Activated CD8-positive, alpha-beta T cell treated with anti-CD3 and anti-CD28 coated beads for 36 hours (primary cell): ENCODE measurements at regions of chr5 and their contacts with region 1.

Region 1: DNA sequence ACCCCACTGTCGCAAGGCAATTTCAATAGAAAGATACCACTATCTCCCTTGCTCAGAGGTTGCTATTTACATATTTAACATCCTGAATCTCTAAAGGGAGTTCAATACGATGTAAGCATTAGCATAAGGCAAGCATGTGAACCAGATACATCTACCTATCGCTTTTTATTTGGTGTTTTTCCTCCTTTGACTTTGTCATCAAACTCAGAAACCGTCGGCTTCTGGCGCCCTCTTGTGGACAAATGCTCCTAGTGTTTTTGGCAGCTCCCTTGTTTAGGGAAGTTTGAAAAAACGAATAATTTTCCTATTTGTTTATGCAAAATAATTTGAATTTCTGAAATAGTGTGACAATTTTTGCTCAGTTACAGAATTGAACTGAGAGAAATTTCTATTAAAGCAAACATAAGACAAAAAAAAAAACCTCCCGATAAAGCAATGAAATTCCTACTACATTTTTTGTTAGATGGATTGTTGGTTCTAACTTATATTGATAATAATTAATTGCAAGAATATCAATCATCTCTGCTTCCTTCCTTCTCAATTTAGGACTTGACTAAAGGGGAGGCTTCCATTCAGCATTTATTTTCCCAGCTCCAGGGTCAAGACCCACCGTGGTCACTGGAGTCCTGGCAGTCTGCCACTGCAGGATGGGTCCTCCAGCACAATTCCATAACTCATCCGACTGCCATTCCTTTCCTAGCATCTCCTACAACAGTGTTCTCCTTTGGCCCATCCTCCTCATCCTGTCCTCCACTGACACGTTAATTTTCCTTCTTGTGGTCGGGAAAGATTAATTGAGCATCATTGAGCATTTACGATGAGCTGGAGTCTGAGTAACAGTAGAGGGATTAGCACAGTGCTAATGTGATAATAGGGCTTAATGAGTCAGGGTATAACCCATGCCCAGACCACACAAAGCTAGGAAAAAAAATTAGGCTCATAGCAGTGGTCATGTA is 131.8 kb upstream of the CHD1 start:
- DNase-seq: peak; percentile 91
- ATAC-seq: peak; percentile 45
- H3K4me3 Mint-ChIP-seq: no peak overlapping the region
- H3K27ac Mint-ChIP-seq: no peak overlapping the region
- H3K4me1 Mint-ChIP-seq: peaks cover 4% of the 10 kb centered on the region
- H3K27me3 Mint-ChIP-seq: peaks cover 2% of the 10 kb centered on the region
- CTCF ChIP-seq: peak; percentile 98

Region 2: GRCh38 chr5:98796197-98796972 is 264.2 kb before region 1 on chr5:
- CTCF ChIA-PET with region 1: interaction called, 11 read pairs
- POLR2A ChIA-PET with region 1: no interaction called
- intact Hi-C with region 1: no loop called
- DNase-seq: peak; percentile 69
- ATAC-seq: peak; percentile 94
- H3K4me3 Mint-ChIP-seq: no peak overlapping the region
- H3K27ac Mint-ChIP-seq: no peak overlapping the region
- H3K4me1 Mint-ChIP-seq: no peaks in the 10 kb centered on the region
- H3K27me3 Mint-ChIP-seq: no peaks in the 10 kb centered on the region
- CTCF ChIP-seq: peak; percentile 77

Region 3: DNA sequence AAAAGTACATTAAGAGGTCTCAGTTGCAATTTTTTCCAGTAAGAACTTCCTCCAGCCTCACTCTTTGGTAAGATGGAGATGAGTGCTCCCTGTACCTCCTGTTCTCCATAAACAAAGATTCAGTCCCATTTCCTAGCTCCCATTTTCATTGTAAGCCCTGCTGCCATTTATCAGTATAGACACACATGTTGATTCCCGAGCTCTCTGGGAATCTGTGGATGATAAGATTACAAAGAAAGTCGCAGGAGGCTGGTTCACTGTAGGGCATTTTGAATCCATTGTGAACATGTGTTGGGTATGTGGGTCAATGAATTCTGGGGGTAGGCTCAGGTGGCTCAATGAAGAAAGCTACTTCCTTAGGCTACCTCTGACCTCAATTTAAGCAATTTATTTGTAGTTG is 250.4 kb before region 1 on chr5:
- CTCF ChIA-PET with region 1: no interaction called
- POLR2A ChIA-PET with region 1: no interaction called
- intact Hi-C with region 1: no loop called
- DNase-seq: no peak
- ATAC-seq: no peak
- H3K4me3 Mint-ChIP-seq: no peak overlapping the region
- H3K27ac Mint-ChIP-seq: no peak overlapping the region
- H3K4me1 Mint-ChIP-seq: peaks cover 2% of the 10 kb centered on the region
- H3K27me3 Mint-ChIP-seq: no peaks in the 10 kb centered on the region
- CTCF ChIP-seq: no peak

Region 4: DNA sequence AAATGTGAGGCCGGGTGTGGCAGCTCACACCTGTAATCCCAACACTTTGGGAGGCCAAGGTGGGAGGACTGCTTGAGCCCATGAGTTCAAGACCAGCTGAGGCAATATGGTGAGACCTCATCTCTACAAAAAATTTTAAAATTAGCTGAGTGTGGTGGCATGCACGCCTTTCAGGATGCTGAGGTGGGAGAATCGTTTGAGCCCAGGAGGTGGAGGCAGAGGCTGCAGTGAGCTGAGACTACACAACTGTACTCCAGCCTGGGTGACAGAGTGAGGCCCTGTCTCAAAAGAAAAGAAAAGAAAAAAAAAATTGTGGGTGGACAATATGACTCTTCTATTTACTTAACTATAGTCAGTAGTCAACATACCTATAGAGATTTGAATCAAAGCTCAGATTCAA is 136.6 kb before region 1 on chr5:
- CTCF ChIA-PET with region 1: interaction called, 13 read pairs
- POLR2A ChIA-PET with region 1: interaction called, 6 read pairs
- intact Hi-C with region 1: no loop called
- DNase-seq: peak; percentile 29
- ATAC-seq: no peak
- H3K4me3 Mint-ChIP-seq: no peak overlapping the region
- H3K27ac Mint-ChIP-seq: peak overlapping the region; percentile 42
- H3K4me1 Mint-ChIP-seq: peaks cover 51% of the 10 kb centered on the region
- H3K27me3 Mint-ChIP-seq: no peaks in the 10 kb centered on the region
- CTCF ChIP-seq: no peak

Region 5: DNA sequence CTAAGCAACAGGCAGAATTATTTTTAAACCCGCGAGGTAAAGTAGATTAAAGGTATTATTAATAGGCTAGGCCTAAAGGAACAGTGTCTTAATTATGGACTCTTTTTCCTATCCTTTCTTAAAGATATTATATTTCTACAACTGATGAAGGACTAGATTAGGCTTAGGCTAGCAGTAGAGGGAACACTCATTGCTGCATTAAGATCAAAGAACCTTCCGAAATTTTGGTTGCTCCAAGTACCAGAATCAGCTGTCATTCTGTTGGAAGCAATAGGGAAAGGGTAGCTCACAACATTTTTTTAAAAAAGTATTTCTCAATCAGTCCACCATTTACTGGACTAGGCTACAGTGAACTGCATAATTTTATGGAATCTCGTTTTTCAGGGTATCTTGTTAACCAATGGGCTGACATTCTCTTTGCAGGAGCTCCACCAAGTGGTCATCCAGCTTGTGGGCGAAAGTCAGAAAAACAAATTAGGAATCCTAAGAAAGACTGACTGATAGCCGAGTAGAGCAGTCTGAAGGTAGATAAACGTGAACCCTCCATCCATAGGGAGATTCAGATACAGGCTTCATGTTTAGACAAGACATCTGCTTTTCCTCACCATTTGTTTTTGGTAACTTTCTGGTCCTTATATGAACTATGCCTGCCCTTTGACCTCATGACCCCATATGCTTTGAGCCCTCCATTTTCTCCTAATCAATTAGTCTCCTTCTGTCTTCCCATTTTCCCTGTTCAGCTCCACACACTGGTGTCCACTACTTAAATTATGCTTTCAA is 28.2 kb before region 1 on chr5:
- CTCF ChIA-PET with region 1: interaction called, 12 read pairs
- POLR2A ChIA-PET with region 1: no interaction called
- intact Hi-C with region 1: no loop called
- DNase-seq: peak; percentile 54
- ATAC-seq: peak; percentile 41
- H3K4me3 Mint-ChIP-seq: peak overlapping the region; percentile 74
- H3K27ac Mint-ChIP-seq: peak overlapping the region; percentile 91
- H3K4me1 Mint-ChIP-seq: peaks cover 59% of the 10 kb centered on the region
- H3K27me3 Mint-ChIP-seq: no peaks in the 10 kb centered on the region
- CTCF ChIP-seq: peak; percentile 36

Region 6: GRCh38 chr5:99070822-99071221 is 10.2 kb after region 1 on chr5:
- CTCF ChIA-PET with region 1: interaction called, 13 read pairs
- POLR2A ChIA-PET with region 1: no interaction called
- intact Hi-C with region 1: no loop called
- DNase-seq: no peak
- ATAC-seq: no peak
- H3K4me3 Mint-ChIP-seq: no peak overlapping the region
- H3K27ac Mint-ChIP-seq: no peak overlapping the region
- H3K4me1 Mint-ChIP-seq: no peaks in the 10 kb centered on the region
- H3K27me3 Mint-ChIP-seq: no peaks in the 10 kb centered on the region
- CTCF ChIP-seq: no peak

Region 7: GRCh38 chr5:99081711-99082110 is 21.1 kb after region 1 on chr5:
- CTCF ChIA-PET with region 1: no interaction called
- POLR2A ChIA-PET with region 1: no interaction called
- intact Hi-C with region 1: no loop called
- DNase-seq: no peak
- ATAC-seq: no peak
- H3K4me3 Mint-ChIP-seq: no peak overlapping the region
- H3K27ac Mint-ChIP-seq: no peak overlapping the region
- H3K4me1 Mint-ChIP-seq: no peaks in the 10 kb centered on the region
- H3K27me3 Mint-ChIP-seq: no peaks in the 10 kb centered on the region
- CTCF ChIP-seq: no peak

Region 8: GRCh38 chr5:99116526-99116925 is 55.9 kb after region 1 on chr5:
- CTCF ChIA-PET with region 1: no interaction called
- POLR2A ChIA-PET with region 1: no interaction called
- intact Hi-C with region 1: no loop called
- DNase-seq: no peak
- ATAC-seq: no peak
- H3K4me3 Mint-ChIP-seq: no peak overlapping the region
- H3K27ac Mint-ChIP-seq: no peak overlapping the region
- H3K4me1 Mint-ChIP-seq: no peaks in the 10 kb centered on the region
- H3K27me3 Mint-ChIP-seq: peaks cover 6% of the 10 kb centered on the region
- CTCF ChIP-seq: no peak

Region 9: GRCh38 chr5:99191206-99191745 is 130.7 kb after region 1 on chr5:
- CTCF ChIA-PET with region 1: no interaction called
- POLR2A ChIA-PET with region 1: no interaction called
- intact Hi-C with region 1: no loop called
- DNase-seq: no peak
- ATAC-seq: no peak
- H3K4me3 Mint-ChIP-seq: no peak overlapping the region
- H3K27ac Mint-ChIP-seq: no peak overlapping the region
- H3K4me1 Mint-ChIP-seq: no peaks in the 10 kb centered on the region
- H3K27me3 Mint-ChIP-seq: peaks cover 2% of the 10 kb centered on the region
- CTCF ChIP-seq: no peak